ENCODE measurements at regions of chr16 and their contacts with region 1.

Region 1: GRCh38 chr16:89115216-89115861 is 21.7 kb downstream of the ACSF3 start:
- DNase-seq: peak; percentile 94 to 98 (median 95)
- H3K4me3 ChIP-seq: peak overlapping the region; percentile 24 to 45
- H3K4me3 Mint-ChIP-seq: peak overlapping the region; percentile 79 to 92 (median 86)
- H3K27ac ChIP-seq: peak overlapping the region; percentile 86
- H3K27ac Mint-ChIP-seq: peak overlapping the region; percentile 85 to 99 (median 97)
- H3K4me1 ChIP-seq: peaks cover 46% of the 10 kb centered on the region
- H3K4me1 Mint-ChIP-seq: peaks cover 21 to 50% (median 37%) of the 10 kb centered on the region in 4 donors
- H3K27me3 ChIP-seq: no peaks in the 10 kb centered on the region
- H3K27me3 Mint-ChIP-seq: no peaks in the 10 kb centered on the region

Region 2: DNA sequence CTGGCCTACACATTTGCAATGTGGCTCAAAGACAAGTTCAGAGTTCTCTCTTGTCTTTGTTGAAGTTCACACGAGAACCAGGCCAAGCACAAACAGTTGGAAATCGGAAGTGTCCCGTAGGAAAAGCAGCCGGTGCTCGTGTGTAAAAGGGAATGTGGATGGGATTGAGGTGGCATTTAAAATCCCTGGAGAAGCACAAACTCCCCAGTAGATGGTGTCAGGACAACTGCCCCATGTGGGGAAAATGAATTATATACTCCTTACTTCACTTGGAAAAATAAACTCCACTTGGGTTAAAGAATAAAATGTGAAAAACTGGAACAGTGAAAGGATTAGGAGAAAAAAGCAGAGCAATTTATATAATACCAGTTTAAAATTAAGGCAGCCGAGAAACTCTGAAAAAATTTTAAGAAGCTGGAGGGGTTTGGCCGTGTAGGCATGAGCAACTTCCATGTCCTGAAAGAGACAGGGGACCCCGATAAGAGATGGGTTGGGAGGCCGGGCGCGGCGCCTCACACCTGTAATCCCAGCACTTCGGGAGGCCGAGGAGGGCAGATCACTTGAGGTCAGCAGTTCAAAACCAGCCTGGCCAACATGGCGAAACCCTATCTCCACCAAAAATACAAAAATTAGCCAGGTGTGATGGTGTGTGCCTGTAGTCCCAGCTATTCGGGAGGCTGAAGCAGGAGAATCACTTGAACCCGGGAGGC is 166.4 kb before region 1 on chr16:
- CTCF ChIA-PET with region 1: interaction called, 4 read pairs
- POLR2A ChIA-PET with region 1: no interaction called
- intact Hi-C with region 1: loop called (anchors 2 kb)
- DNase-seq: no peak
- H3K4me3 ChIP-seq: no peak overlapping the region
- H3K4me3 Mint-ChIP-seq: no peak overlapping the region
- H3K27ac ChIP-seq: no peak overlapping the region
- H3K27ac Mint-ChIP-seq: no peak overlapping the region
- H3K4me1 ChIP-seq: no peaks in the 10 kb centered on the region
- H3K4me1 Mint-ChIP-seq: no peaks in the 10 kb centered on the region
- H3K27me3 ChIP-seq: no peaks in the 10 kb centered on the region
- H3K27me3 Mint-ChIP-seq: peaks cover 5 to 7% of the 10 kb centered on the region in 2 donors

Region 3: DNA sequence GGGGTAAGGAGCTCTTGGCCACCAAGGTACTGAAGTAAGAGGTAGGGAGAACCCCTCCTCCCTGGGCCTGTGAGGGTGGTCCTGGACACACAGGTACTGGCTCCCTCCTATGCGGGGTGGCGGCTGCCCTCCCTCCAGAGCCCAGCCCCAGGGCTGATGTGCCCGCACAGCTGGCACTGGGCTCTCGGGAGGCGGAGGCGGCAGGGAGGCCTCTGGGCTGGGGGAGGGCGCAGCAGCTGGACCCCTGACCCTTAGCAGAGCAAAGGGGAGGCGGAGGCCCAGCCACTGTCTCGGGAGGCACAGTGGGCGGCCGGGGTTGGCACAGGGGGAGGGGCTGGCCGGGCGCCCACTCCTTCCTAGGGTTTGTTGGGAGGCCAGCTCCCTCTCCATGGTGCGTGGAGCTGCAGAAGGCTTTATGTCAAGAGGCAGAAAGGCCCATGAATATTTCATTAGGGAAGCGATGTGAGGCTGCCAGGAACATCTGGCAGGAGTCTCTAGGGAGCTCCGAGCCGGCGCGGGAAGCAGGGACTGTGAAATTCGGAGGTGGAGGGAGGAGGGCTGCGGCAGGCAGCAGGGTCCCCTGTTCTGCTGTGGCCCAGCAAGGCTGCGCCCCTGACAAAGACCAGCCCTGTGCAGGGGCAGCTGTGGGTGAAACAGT is 65.7 kb before region 1 on chr16:
- CTCF ChIA-PET with region 1: no interaction called
- POLR2A ChIA-PET with region 1: no interaction called
- intact Hi-C with region 1: no loop called
- DNase-seq: peak in 1 of 5 donors; percentile 32
- H3K4me3 ChIP-seq: no peak overlapping the region
- H3K4me3 Mint-ChIP-seq: peak overlapping the region in 1 of 8 donors; percentile 26
- H3K27ac ChIP-seq: no peak overlapping the region
- H3K27ac Mint-ChIP-seq: peak overlapping the region in 2 of 7 donors; percentile 72 to 74
- H3K4me1 ChIP-seq: no peaks in the 10 kb centered on the region
- H3K4me1 Mint-ChIP-seq: peaks cover 0 to 4% (median 3%) of the 10 kb centered on the region in 4 donors
- H3K27me3 ChIP-seq: no peaks in the 10 kb centered on the region
- H3K27me3 Mint-ChIP-seq: no peaks in the 10 kb centered on the region

Region 4: DNA sequence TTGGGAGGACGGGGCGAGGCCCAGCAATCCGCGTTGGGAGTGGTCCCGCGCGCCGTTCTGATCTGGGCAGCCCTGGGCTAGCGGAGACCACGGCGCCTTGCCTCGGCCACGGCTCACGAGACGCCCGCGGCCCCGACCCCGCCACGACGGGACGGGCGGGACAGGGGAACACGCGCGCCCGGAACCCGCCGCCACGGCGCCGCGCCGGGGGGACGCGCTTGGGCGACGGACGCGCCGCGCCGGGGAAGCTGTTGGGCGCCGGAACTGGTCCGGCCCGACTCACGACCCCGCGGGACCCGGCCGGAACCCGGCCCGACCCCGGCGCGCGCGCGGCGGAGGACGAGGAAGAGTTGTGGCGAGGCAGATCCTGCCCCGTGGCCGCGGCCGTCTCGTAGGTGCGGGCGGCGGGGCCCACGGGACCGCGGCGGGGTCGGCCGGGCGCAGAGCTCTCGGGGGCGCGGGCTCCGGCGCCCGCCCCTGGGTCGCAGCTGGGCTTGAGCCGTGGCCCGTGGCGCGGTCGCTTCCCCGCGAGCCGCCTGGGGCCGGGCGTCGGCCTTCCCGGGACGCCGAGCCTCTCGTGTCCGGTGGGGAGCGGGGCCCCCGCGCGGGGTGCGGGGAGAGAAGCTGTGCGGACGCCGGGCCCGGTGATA is 21.6 kb before region 1 on chr16 and contains the start of gene ACSF3:
- CTCF ChIA-PET with region 1: interaction called, 3 read pairs
- POLR2A ChIA-PET with region 1: interaction called, 107 read pairs
- intact Hi-C with region 1: loop called (anchors 1 kb)
- DNase-seq: peak; percentile 59 to 72 (median 63)
- H3K4me3 ChIP-seq: peak within 1 kb of the TSS; percentile 69 to 84
- H3K4me3 Mint-ChIP-seq: peak within 1 kb of the TSS; percentile 94 to 99 (median 97)
- H3K27ac ChIP-seq: peak within 1 kb of the TSS; percentile 51
- H3K27ac Mint-ChIP-seq: peak within 1 kb of the TSS; percentile 90 to 99 (median 97)
- H3K4me1 ChIP-seq: peaks cover 49% of the 10 kb centered on the region
- H3K4me1 Mint-ChIP-seq: peaks cover 38 to 58% (median 49%) of the 10 kb centered on the region in 4 donors
- H3K27me3 ChIP-seq: no peaks in the 10 kb centered on the region
- H3K27me3 Mint-ChIP-seq: peaks cover 5 to 10% of the 10 kb centered on the region in 2 donors
- total RNA-seq, gene ACSF3: 65.3 to 71.2 TPM

Region 5: GRCh38 chr16:89142478-89143195 is 27.3 kb after region 1 on chr16:
- CTCF ChIA-PET with region 1: no interaction called
- POLR2A ChIA-PET with region 1: no interaction called
- intact Hi-C with region 1: no loop called
- DNase-seq: no peak
- H3K4me3 ChIP-seq: no peak overlapping the region
- H3K4me3 Mint-ChIP-seq: no peak overlapping the region
- H3K27ac ChIP-seq: no peak overlapping the region
- H3K27ac Mint-ChIP-seq: peak overlapping the region in 1 of 7 donors; percentile 77
- H3K4me1 ChIP-seq: no peaks in the 10 kb centered on the region
- H3K4me1 Mint-ChIP-seq: peaks cover 0 to 5% (median under 1%) of the 10 kb centered on the region in 4 donors
- H3K27me3 ChIP-seq: no peaks in the 10 kb centered on the region
- H3K27me3 Mint-ChIP-seq: no peaks in the 10 kb centered on the region

Region 6: GRCh38 chr16:89193021-89193575 is 77.8 kb after region 1 on chr16:
- CTCF ChIA-PET with region 1: no interaction called
- POLR2A ChIA-PET with region 1: interaction called, 4 read pairs
- intact Hi-C with region 1: loop called (anchors 2 kb)
- DNase-seq: peak in 4 of 5 donors; percentile 41 to 71 (median 49)
- H3K4me3 ChIP-seq: no peak overlapping the region
- H3K4me3 Mint-ChIP-seq: no peak overlapping the region
- H3K27ac ChIP-seq: no peak overlapping the region
- H3K27ac Mint-ChIP-seq: no peak overlapping the region
- H3K4me1 ChIP-seq: no peaks in the 10 kb centered on the region
- H3K4me1 Mint-ChIP-seq: peaks cover 0 to 17% (median 3%) of the 10 kb centered on the region in 4 donors
- H3K27me3 ChIP-seq: no peaks in the 10 kb centered on the region
- H3K27me3 Mint-ChIP-seq: no peaks in the 10 kb centered on the region

Region 7: GRCh38 chr16:89217388-89218191 is 102.3 kb after region 1 on chr16 and contains the start of gene ZNF778:
- CTCF ChIA-PET with region 1: interaction called, 5 read pairs
- POLR2A ChIA-PET with region 1: interaction called, 11 read pairs
- intact Hi-C with region 1: loop called (anchors 1 kb)
- DNase-seq: peak; percentile 83 to 87 (median 85)
- H3K4me3 ChIP-seq: peak within 1 kb of the TSS; percentile 76 to 91
- H3K4me3 Mint-ChIP-seq: peak within 1 kb of the TSS; percentile 73 to 94 (median 92)
- H3K27ac ChIP-seq: peak within 1 kb of the TSS; percentile 94
- H3K27ac Mint-ChIP-seq: peak within 1 kb of the TSS; percentile 64 to 98 (median 92)
- H3K4me1 ChIP-seq: peaks cover 21% of the 10 kb centered on the region
- H3K4me1 Mint-ChIP-seq: peaks cover 10 to 37% (median 26%) of the 10 kb centered on the region in 4 donors
- H3K27me3 ChIP-seq: no peaks in the 10 kb centered on the region
- H3K27me3 Mint-ChIP-seq: no peaks in the 10 kb centered on the region
- total RNA-seq, gene ZNF778: 13.1 to 15.9 TPM

Measured in CD4-positive, alpha-beta memory T cell (primary cell).